Ascending aorta (tissue), 2 donors: ENCODE measurements at regions of chr10 and their contacts with region 1.

Region 1: DNA sequence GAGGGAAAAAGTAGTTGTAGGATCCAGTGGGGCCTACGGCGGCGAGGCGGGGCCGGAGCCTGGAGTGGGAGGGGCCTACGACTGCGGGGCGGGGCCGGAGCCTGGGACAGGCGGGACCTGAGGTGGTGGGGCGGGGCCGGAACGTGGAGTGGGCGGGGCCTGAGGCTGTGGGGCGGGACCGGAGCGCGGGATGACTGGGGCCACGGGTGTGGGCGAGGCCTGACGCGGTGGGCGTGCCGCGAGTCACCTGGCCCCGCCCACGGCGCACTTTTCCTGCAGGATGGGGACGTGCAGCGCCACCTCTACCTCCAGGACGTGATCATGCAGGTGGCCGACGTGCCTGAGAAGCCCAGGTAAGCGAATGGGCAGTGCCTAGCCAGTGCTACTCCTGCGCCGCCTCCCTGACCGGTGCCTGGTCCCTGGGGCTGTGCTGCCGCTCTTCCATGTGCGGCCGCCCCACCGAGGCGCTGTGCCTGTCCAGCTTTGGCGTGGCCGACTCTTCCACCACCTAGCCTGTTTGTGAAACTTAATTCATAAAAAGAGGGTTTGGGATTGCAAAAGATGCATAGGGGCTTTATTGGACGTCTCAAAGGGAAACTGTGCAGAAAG is 501 bp downstream of the ZNF511 start:
- DNase-seq: peak; percentile 72 to 94
- H3K4me3 ChIP-seq: peak overlapping the region; percentile 92 to 93
- H3K27ac ChIP-seq: peak overlapping the region; percentile 87 to 91
- H3K4me1 ChIP-seq: peaks cover 2 to 25% of the 10 kb centered on the region in 2 donors
- H3K27me3 ChIP-seq: no peaks in the 10 kb centered on the region
- CTCF ChIP-seq: no peak

Region 2: DNA sequence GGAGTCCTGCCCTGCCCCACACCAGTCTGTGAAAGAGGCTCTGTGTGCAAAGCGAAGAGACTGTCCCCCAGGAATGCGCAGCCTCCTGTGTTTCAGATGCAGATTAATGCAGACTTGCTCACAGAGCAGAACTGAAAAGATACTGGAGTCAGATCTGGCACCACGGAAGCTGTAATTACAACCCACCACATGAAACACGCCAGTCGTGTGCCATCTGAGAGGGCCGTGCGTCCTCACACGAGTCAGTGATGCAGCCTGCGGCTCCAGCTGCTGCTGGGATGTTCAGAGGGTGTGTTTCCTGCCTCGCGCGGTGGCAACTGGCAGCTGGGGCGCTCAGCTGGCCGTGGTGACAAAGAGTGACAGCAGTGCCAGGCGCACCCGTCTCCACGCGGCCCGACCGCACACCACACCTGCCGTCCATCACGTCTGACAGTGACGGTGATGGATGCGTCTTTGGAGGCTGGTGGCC is 573.3 kb before region 1 on chr10:
- intact Hi-C with region 1: no loop called
- DNase-seq: no peak
- H3K4me3 ChIP-seq: no peak overlapping the region
- H3K27ac ChIP-seq: no peak overlapping the region
- H3K4me1 ChIP-seq: no peaks in the 10 kb centered on the region
- H3K27me3 ChIP-seq: no peaks in the 10 kb centered on the region
- CTCF ChIP-seq: no peak

Region 3: GRCh38 chr10:133186416-133187090 is 122.7 kb before region 1 on chr10:
- intact Hi-C with region 1: no loop called
- DNase-seq: no peak
- H3K4me3 ChIP-seq: no peak overlapping the region
- H3K27ac ChIP-seq: no peak overlapping the region
- H3K4me1 ChIP-seq: no peaks in the 10 kb centered on the region
- H3K27me3 ChIP-seq: no peaks in the 10 kb centered on the region
- CTCF ChIP-seq: no peak

Region 4: GRCh38 chr10:133261726-133262325 is 47.4 kb before region 1 on chr10:
- intact Hi-C with region 1: loop called (anchors 1 kb)
- DNase-seq: peak in 1 of 2 donors; percentile 90
- H3K4me3 ChIP-seq: peak overlapping the region; percentile 75 to 89
- H3K27ac ChIP-seq: peak overlapping the region; percentile 80 to 85
- H3K4me1 ChIP-seq: peaks cover 14 to 18% of the 10 kb centered on the region in 2 donors
- H3K27me3 ChIP-seq: no peaks in the 10 kb centered on the region
- CTCF ChIP-seq: no peak

Region 5: GRCh38 chr10:133278577-133279265 is 30.5 kb before region 1 on chr10:
- intact Hi-C with region 1: no loop called
- DNase-seq: no peak
- H3K4me3 ChIP-seq: no peak overlapping the region
- H3K27ac ChIP-seq: no peak overlapping the region
- H3K4me1 ChIP-seq: peaks cover 0 to 3% of the 10 kb centered on the region in 2 donors
- H3K27me3 ChIP-seq: no peaks in the 10 kb centered on the region
- CTCF ChIP-seq: no peak

Region 6: DNA sequence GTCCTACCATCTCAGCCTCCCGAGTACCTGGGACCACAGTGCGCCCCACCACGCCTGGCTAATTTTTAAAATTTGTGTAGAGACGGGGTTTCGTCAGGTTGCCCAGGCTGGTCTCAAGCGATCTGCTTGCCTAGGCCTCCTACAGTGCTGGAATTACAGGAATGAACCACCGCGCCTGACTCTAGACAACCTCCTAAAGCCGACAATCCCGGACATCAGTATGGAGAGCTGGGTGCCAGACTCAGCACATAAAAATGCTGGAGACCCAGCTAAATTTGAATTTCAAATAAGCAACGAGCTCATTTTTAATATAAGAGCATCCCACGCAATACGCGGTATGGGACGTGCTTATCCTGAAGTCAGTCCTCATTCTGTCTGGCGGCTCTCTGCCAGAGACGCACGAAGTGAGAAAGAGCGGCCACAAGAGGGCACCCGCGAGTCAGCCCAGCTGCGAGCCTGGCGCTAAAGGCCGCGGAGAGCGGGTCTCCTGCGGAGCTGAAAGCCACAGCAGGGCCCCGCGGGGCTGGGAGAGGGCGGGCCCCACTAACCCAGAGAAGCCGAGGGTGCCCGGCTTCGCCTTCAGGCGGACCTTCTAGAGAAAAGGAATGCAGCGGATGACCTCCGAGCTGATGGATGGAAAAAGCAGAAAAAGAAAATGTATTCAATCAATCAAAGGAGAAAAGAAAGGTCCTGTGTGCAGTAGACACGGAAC is 20.4 kb after region 1 on chr10:
- intact Hi-C with region 1: loop called (anchors 2 kb)
- DNase-seq: peak in 1 of 2 donors; percentile 86
- H3K4me3 ChIP-seq: peak overlapping the region; percentile 34 to 55
- H3K27ac ChIP-seq: no peak overlapping the region
- H3K4me1 ChIP-seq: peaks cover 8 to 11% of the 10 kb centered on the region in 2 donors
- H3K27me3 ChIP-seq: peaks cover 19% of the 10 kb centered on the region
- CTCF ChIP-seq: peak; percentile 73 to 99 (median 97)

Region 7: DNA sequence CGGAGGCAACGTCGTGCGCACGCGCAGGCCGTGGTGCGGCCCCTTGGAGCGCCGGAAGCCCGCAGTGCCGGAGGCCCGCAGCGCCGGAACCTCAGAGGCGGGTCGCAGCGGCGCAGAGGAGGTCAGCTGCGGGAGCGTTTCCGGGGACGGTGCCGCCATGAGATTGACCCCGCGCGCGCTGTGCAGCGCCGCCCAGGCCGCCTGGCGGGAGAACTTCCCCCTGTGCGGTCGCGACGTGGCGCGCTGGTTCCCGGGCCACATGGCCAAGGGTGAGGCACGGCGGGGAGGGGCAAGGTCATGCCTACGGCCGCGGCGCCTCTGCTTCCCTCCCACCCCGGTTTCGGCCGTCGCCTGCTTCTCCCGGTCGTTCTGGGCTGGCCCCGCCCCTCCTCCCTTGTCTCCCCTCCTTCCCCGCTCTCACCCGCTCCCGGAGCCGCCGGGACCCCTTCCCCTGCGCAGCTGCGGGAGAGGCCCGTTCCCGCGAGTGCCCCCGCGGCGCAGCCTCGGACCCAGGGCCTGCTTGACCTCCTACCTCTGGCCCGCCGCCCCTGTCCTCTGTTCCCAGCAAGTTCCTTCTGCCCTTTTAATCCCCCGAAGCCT is 84.9 kb after region 1 on chr10 and contains the start of gene MTG1:
- intact Hi-C with region 1: loop called (anchors 5 kb)
- DNase-seq: peak; percentile 58 to 95
- H3K4me3 ChIP-seq: peak within 1 kb of the TSS; percentile 85 to 97
- H3K27ac ChIP-seq: peak within 1 kb of the TSS; percentile 68 to 82
- H3K4me1 ChIP-seq: peaks cover 0 to 14% of the 10 kb centered on the region in 2 donors
- H3K27me3 ChIP-seq: no peaks in the 10 kb centered on the region
- CTCF ChIP-seq: peak in 2 of 3 experiments; percentile 22 to 30
- total RNA-seq, gene MTG1: 37.8 TPM

Region 8: GRCh38 chr10:133516057-133516456 is 206.8 kb after region 1 on chr10:
- intact Hi-C with region 1: no loop called
- DNase-seq: no peak
- H3K4me3 ChIP-seq: no peak overlapping the region
- H3K27ac ChIP-seq: no peak overlapping the region
- H3K4me1 ChIP-seq: no peaks in the 10 kb centered on the region
- H3K27me3 ChIP-seq: no peaks in the 10 kb centered on the region
- CTCF ChIP-seq: no peak